Breast epithelium (tissue), 4 donors: ENCODE measurements at regions of chr1 and their contacts with region 1.

Region 1: GRCh38 chr1:109979489-109980091 is 5.0 kb upstream of the AHCYL1 start:
- DNase-seq: no peak
- H3K4me3 ChIP-seq: no peak overlapping the region
- H3K27ac ChIP-seq: peak overlapping the region; percentile 66 to 71
- H3K4me1 ChIP-seq: peaks cover 0 to 4% of the 10 kb centered on the region in 2 donors
- H3K27me3 ChIP-seq: no peaks in the 10 kb centered on the region
- CTCF ChIP-seq: no peak
- POLR2A ChIP-seq: no peak

Region 2: DNA sequence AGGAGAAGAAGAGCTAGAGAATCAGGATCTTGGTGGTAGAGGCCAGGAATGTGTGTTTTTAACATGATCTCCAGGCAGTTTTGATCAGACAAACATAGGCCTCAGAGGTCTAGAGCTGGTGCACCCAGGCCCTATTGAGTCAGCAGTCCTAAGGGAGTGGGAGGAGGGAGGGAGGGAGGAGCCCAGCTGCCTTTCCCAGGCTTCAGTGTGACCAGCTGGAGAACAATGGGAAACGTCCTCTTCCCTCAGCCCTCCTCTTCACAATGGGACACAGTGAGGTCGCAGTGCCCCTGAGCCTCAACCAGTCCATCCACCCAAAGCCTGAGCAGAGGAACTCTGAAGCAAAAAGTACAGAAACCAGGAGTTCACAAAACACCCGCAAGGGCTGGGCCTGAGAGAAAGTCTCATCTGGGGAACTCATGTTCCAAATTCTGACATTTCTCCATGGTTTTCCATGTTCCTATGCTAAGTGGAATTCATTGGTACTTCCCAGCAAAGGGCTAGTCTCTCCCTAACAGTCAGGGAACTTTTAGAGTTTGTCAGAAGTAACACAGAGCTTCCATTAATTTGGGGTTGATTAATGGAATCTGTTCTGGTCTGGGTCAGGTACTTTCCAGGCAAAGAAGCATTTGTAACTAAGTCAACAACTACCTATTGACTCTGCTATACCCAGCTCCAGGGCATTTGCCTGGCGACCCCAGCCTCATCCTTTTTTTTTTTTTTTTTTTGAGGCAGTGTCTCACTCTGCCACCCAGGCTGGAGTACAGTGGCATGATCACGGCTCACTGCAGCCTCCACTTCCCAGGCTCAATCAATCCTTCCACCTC is 828.2 kb before region 1 on chr1:
- intact Hi-C with region 1: loop called (anchors 5 kb)
- DNase-seq: peak in 1 of 2 donors; percentile 27
- H3K4me3 ChIP-seq: no peak overlapping the region
- H3K27ac ChIP-seq: peak overlapping the region; percentile 79 to 81
- H3K4me1 ChIP-seq: peaks cover 0 to 11% of the 10 kb centered on the region in 2 donors
- H3K27me3 ChIP-seq: no peaks in the 10 kb centered on the region
- CTCF ChIP-seq: no peak
- POLR2A ChIP-seq: no peak

Region 3: DNA sequence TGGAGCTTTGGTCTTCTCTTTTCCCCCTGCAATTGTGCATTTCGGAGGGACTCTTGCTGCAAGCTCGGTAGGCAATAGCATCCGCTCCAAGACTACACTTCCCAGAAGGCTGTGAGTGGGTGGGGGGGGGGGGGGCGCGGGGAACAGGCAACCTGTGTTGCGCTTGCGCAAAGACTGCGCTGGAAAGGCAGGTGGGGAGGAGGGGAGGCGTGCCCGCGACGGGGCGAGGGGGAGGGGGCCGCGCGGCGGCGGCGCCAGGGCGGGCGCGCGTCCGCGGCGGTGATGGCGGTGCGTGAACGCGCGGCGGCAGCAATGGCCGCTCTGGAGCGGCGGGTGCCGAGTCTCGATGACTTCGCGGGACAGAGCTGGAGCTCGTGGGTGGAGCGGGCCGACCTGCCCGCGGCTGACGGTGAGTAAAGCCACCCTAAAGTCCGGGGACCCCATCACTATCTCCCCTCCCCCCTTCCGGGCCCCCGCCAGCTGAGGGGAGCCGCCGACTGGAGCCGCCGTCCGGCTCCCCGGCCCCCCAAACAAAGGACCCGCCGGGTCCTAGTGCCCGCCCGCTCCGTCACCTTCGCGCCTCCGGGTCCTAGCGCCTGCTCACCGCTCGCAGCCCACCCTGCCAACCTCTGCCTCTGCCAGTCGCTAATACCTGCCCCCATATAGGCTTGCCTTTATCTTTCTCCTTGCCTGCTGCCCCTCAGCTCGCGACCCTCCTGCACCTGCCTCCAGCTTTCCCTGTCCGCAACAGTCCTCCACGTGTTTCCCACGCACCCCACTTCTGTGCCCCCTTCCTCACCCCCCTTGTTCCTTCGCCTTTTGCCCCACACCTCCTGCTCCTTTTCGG is 495.7 kb before region 1 on chr1 and contains the start of gene ATXN7L2:
- intact Hi-C with region 1: no loop called
- DNase-seq: peak; percentile 89
- H3K4me3 ChIP-seq: peak within 1 kb of the TSS; percentile 69 to 88 (median 70)
- H3K27ac ChIP-seq: peak within 1 kb of the TSS; percentile 97 to 100
- H3K4me1 ChIP-seq: peaks cover 0 to 8% of the 10 kb centered on the region in 2 donors
- H3K27me3 ChIP-seq: no peaks in the 10 kb centered on the region
- CTCF ChIP-seq: no peak
- POLR2A ChIP-seq: no peak
- total RNA-seq, gene ATXN7L2: 2.4 to 4.1 (median 2.9) TPM